ENCODE measurements at regions of chr1 and their contacts with region 1.

Region 1: DNA sequence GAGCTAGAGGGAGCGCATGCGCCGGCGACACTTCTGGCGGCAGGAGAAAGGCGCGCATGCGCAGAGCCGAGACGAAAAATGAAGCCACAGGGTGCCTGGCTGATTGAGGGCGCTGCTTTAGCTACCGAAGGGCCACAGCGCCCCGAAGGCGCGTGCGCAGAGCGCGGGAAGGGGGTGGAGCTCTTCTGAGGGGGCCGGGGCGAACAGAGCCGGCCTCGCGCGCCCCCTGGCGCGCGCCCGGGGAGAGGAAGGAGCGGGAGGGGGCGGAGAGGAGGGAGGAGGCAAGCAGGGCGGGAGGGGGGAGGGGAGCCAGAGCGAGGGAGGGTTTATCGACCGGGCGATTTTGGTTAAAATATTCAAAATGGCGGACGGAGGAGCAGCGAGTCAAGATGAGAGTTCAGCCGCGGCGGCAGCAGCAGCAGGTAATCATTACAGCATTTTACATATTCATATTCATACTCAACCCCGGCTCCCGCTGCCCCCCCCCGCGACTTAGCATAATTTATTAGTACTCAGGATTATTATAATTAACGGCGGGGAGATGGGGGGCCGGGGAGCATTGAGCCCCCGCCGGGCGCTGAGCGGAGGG is at the start of gene POU2F1:
- DNase-seq: peak; percentile 97 to 99 (median 98)
- ATAC-seq: peak; percentile 91
- H3K4me3 ChIP-seq: peak within 1 kb of the TSS; percentile 90
- H3K4me3 Mint-ChIP-seq: peak within 1 kb of the TSS; percentile 87 to 98 (median 96)
- H3K27ac ChIP-seq: peak within 1 kb of the TSS; percentile 83
- H3K27ac Mint-ChIP-seq: peak within 1 kb of the TSS; percentile 92 to 99 (median 98)
- H3K4me1 ChIP-seq: peaks cover 11 to 20% of the 10 kb centered on the region in 2 donors
- H3K4me1 Mint-ChIP-seq: peaks cover 28 to 48% (median 42%) of the 10 kb centered on the region in 7 donors
- H3K27me3 ChIP-seq: no peaks in the 10 kb centered on the region
- H3K27me3 Mint-ChIP-seq: peaks cover 0 to 3% (median 0%) of the 10 kb centered on the region in 5 donors
- total RNA-seq, gene POU2F1: 20.6 to 36.6 (median 23.3) TPM

Region 2: DNA sequence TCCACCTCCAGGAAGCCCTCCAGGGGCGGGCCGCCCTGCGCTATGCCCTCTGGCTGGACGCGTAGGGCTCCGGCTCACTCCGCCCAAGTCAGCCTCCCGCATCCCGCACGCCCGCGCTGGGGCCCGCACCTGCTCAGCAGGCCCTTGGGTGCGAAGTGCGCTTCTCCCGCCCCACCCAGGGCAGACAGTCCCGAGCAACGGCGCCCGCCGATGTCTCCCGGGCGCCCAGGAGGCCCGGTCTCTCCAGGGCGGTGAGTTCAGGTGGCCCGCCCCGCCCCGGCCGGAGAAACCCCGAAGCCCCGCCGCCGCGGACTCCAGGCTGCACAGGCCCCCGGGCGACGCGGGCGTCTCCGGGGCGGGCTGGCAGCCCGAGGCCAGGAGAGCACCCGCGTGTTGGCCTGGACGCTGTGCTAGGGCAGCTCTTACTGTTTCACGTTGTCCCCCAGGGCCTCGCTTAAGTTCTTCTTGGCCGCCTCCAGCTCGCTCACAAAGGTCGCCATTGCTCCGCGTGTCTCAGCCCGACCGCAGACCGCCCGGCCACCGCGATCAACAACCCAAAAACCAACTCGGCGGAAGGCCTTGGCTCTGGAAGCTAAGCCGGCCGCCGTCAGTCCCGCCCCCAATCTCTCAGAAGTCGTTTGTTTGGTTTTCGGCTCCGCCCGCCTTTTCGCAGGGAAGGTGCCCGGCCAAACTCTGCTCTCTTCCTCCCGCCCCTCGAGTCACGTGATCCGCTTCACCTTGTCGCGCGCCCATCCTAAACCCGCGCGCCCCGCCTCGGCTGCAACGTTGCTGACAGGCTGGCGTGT is 344.7 kb before region 1 on chr1 and contains the start of gene TADA1:
- CTCF ChIA-PET with region 1: interaction called, 3 read pairs
- POLR2A ChIA-PET with region 1: interaction called, 7 read pairs
- intact Hi-C with region 1: loop called (anchors 1 kb)
- DNase-seq: peak; percentile 87 to 97 (median 96)
- ATAC-seq: peak; percentile 95
- H3K4me3 ChIP-seq: peak within 1 kb of the TSS; percentile 64
- H3K4me3 Mint-ChIP-seq: peak within 1 kb of the TSS; percentile 93 to 100 (median 96)
- H3K27ac ChIP-seq: peak within 1 kb of the TSS; percentile 83
- H3K27ac Mint-ChIP-seq: peak within 1 kb of the TSS; percentile 75 to 99 (median 98)
- H3K4me1 ChIP-seq: peaks cover 10 to 12% of the 10 kb centered on the region in 2 donors
- H3K4me1 Mint-ChIP-seq: peaks cover 43 to 63% (median 55%) of the 10 kb centered on the region in 7 donors
- H3K27me3 ChIP-seq: no peaks in the 10 kb centered on the region
- H3K27me3 Mint-ChIP-seq: peaks cover 0 to 11% (median 0%) of the 10 kb centered on the region in 5 donors
- total RNA-seq, gene TADA1: 9.4 to 16.2 (median 15.6) TPM

Region 3: GRCh38 chr1:167121375-167122120 is 99.1 kb before region 1 on chr1:
- CTCF ChIA-PET with region 1: interaction called, 3 read pairs
- POLR2A ChIA-PET with region 1: no interaction called
- intact Hi-C with region 1: loop called (anchors 1 to 2 kb)
- DNase-seq: peak in 8 of 9 donors; percentile 11 to 59 (median 43)
- ATAC-seq: peak; percentile 75
- H3K4me3 ChIP-seq: peak overlapping the region; percentile 79
- H3K4me3 Mint-ChIP-seq: peak overlapping the region; percentile 81 to 93 (median 88)
- H3K27ac ChIP-seq: no peak overlapping the region
- H3K27ac Mint-ChIP-seq: peak overlapping the region in 8 of 9 donors; percentile 17 to 82 (median 74)
- H3K4me1 ChIP-seq: peaks cover 0 to 8% of the 10 kb centered on the region in 2 donors
- H3K4me1 Mint-ChIP-seq: peaks cover 4 to 10% (median 7%) of the 10 kb centered on the region in 7 donors
- H3K27me3 ChIP-seq: no peaks in the 10 kb centered on the region
- H3K27me3 Mint-ChIP-seq: peaks cover 0 to 12% (median 5%) of the 10 kb centered on the region in 5 donors

Region 4: GRCh38 chr1:167454894-167455785 is 234.5 kb after region 1 on chr1:
- CTCF ChIA-PET with region 1: interaction called, 7 read pairs
- POLR2A ChIA-PET with region 1: interaction called, 3 read pairs
- intact Hi-C with region 1: loop called in 1 of 2 experiments (anchors 2 kb)
- DNase-seq: peak; percentile 64 to 87 (median 83)
- ATAC-seq: peak; percentile 74
- H3K4me3 ChIP-seq: peak overlapping the region; percentile 91
- H3K4me3 Mint-ChIP-seq: peak overlapping the region; percentile 80 to 91 (median 87)
- H3K27ac ChIP-seq: peak overlapping the region; percentile 100
- H3K27ac Mint-ChIP-seq: peak overlapping the region; percentile 41 to 98 (median 93)
- H3K4me1 ChIP-seq: peaks cover 34 to 70% of the 10 kb centered on the region in 2 donors
- H3K4me1 Mint-ChIP-seq: peaks cover 37 to 86% (median 72%) of the 10 kb centered on the region in 7 donors
- H3K27me3 ChIP-seq: no peaks in the 10 kb centered on the region
- H3K27me3 Mint-ChIP-seq: no peaks in the 10 kb centered on the region

Region 5: GRCh38 chr1:167553136-167554027 is 332.8 kb after region 1 on chr1 and contains the start of gene CREG1:
- CTCF ChIA-PET with region 1: interaction called, 5 read pairs
- POLR2A ChIA-PET with region 1: interaction called, 15 read pairs
- intact Hi-C with region 1: loop called (anchors 1 kb)
- DNase-seq: peak; percentile 82 to 92 (median 88)
- ATAC-seq: peak; percentile 98
- H3K4me3 ChIP-seq: peak within 1 kb of the TSS; percentile 71
- H3K4me3 Mint-ChIP-seq: peak within 1 kb of the TSS; percentile 85 to 97 (median 92)
- H3K27ac ChIP-seq: peak within 1 kb of the TSS; percentile 72
- H3K27ac Mint-ChIP-seq: peak within 1 kb of the TSS; percentile 43 to 88 (median 80)
- H3K4me1 ChIP-seq: peaks cover 19% of the 10 kb centered on the region in 2 donors
- H3K4me1 Mint-ChIP-seq: peaks cover 35 to 58% (median 46%) of the 10 kb centered on the region in 7 donors
- H3K27me3 ChIP-seq: no peaks in the 10 kb centered on the region
- H3K27me3 Mint-ChIP-seq: peaks cover 0 to 4% (median 0%) of the 10 kb centered on the region in 5 donors
- total RNA-seq, gene CREG1: 10.6 to 33.4 (median 23.1) TPM

Region 6: DNA sequence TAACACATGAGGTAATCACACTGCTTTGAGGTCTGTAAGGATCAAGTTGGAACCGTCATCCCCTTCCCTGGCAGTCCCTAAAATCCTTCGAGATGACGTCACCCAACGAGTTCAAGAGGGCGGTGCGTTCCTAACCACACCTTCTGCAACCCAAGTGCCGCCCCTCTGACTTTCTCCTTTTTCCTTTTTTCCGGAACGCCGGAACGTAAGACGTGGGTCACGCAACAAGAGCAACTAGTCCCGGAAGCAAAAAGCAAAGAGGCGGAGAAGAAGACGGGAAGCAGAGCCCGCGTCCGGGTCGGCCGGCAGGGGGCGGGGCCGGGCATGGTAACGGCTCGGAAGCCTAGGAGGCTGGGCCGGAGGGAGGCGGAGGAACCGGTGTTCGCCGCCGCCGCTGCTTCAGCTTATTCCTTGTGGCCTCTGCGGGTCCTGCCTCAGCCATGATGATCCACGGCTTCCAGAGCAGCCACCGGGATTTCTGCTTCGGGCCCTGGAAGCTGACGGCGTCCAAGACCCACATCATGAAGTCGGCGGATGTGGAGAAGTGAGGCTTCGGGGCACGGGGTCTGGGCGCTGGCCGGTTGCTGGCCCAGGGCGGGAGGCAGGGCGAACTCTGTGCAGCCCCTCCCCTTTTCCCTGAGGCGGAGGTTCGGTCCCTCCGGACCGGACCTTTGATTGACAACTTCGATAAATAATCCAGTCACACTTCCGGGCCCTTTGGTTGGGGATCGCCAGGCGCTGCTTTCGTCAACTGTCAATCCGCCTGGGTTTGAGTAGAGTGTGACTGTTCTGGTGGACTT is 958.2 kb after region 1 on chr1 and contains the start of gene TIPRL:
- CTCF ChIA-PET with region 1: no interaction called
- POLR2A ChIA-PET with region 1: no interaction called
- intact Hi-C with region 1: loop called in 1 of 2 experiments (anchors 1 kb)
- DNase-seq: peak; percentile 88 to 94 (median 93)
- ATAC-seq: peak; percentile 95
- H3K4me3 ChIP-seq: peak within 1 kb of the TSS; percentile 80
- H3K4me3 Mint-ChIP-seq: no peak within 1 kb of the TSS
- H3K27ac ChIP-seq: peak within 1 kb of the TSS; percentile 96
- H3K27ac Mint-ChIP-seq: no peak within 1 kb of the TSS
- H3K4me1 ChIP-seq: peaks cover 14 to 16% of the 10 kb centered on the region in 2 donors
- H3K4me1 Mint-ChIP-seq: peaks cover 3 to 20% (median 9%) of the 10 kb centered on the region in 7 donors
- H3K27me3 ChIP-seq: no peaks in the 10 kb centered on the region
- H3K27me3 Mint-ChIP-seq: peaks cover 2 to 9% (median 2%) of the 10 kb centered on the region in 5 donors
- total RNA-seq, gene TIPRL: 17.2 to 41.2 (median 23.5) TPM